B cell (primary cell): ENCODE measurements at regions of chr16 and their contacts with region 1.

Region 1: DNA sequence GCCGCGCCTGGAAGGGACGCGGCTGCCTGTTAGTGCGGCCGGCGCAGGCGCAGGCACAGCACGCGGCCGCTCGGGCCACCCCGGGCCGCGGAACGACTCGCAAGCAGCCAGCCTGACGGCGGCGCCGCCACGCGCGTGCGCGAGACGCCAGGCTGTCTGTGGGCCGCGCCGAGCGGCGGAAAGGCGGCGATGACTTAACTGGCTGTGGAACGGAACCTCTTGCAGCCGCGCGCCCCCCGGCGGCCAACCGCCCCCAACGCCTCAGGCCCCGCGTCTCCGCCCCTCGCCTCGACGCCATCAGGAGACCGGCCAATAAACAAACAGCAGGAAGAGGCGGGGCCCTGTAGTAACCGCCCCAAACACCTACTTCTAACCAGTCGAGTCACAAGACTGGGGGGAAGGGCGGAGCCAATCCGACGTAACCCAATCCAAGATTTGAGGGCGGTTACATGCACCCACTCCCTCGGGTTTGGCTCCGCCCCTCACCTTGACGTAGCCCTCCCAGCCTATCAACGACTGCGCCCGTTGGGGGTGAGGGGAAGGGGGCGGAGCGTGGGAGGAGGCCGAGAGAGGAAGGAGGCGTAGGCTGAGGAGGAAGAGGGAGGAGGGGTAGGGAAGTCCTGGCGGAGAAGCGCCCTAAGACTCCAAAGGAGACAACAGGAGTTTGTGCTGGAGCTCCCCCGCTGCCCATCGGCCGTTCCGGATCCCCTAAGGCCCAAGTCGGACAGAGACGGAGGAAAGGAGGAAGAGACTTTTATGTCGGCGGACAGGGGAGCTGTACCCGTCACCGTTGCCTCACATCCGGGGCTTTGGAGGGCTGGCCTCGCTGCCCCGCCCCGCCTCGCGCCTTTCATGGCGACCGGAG is at the start of gene FBRS:
- DNase-seq: peak; percentile 100
- ATAC-seq: peak; percentile 76
- H3K4me3 ChIP-seq: peak within 1 kb of the TSS; percentile 49 to 90 (median 79)
- H3K4me3 Mint-ChIP-seq: peak within 1 kb of the TSS; percentile 97
- H3K27ac ChIP-seq: peak within 1 kb of the TSS; percentile 88 to 98
- H3K27ac Mint-ChIP-seq: peak within 1 kb of the TSS; percentile 100
- H3K4me1 ChIP-seq: peaks cover 30 to 44% of the 10 kb centered on the region in 2 donors
- H3K4me1 Mint-ChIP-seq: peaks cover 30% of the 10 kb centered on the region
- H3K27me3 ChIP-seq: no peaks in the 10 kb centered on the region
- H3K27me3 Mint-ChIP-seq: no peaks in the 10 kb centered on the region
- CTCF ChIP-seq: peak; percentile 81
- total RNA-seq, gene FBRS: 191 and 194 TPM in 2 replicates

Region 2: DNA sequence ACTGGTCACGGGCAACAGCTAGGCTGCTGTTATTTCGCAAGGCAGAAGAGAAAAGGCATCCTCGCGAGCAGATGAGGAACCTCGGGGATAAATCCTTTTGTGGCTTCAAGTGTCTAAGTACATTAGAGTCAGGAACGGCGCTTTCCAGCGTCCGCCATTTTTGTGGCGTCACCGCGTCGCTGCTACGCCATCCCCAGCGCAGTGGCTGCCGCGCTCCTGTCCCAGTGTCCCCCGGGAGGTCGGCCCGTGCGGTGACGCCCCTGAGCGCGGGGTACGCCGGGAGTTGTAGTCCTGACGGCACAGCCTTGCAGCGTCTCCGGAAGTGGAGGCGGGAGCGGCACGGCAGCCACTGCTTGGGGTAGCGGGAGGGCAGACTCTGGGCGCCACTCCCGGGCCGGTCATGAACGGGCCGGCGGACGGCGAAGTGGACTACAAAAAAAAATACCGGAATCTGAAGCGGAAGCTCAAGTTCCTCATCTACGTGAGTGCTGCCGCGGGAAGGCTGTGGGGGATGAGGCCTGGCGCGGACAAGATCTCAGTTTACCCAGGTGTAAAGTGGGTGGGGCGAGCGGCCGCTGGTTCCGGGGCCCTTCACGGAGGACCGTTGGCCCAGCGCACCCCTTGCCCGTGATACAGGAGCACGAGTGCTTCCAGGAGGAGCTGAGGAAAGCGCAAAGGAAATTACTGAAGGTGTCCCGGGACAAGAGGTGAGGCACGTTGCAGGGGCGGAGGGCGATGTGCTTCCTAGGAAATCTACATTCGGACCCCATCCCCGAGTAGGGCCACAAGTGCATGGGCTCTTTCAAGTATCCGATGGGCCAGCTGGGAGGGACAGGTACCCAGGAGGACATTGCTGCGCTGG is 662.0 kb before region 1 on chr16 and contains the start of gene INO80E:
- CTCF ChIA-PET with region 1: no interaction called
- POLR2A ChIA-PET with region 1: no interaction called
- intact Hi-C with region 1: loop called (anchors 5 kb)
- DNase-seq: peak; percentile 97
- ATAC-seq: peak; percentile 96
- H3K4me3 ChIP-seq: peak within 1 kb of the TSS; percentile 89 to 100 (median 98)
- H3K4me3 Mint-ChIP-seq: peak within 1 kb of the TSS; percentile 98
- H3K27ac ChIP-seq: peak within 1 kb of the TSS; percentile 94 to 97
- H3K27ac Mint-ChIP-seq: peak within 1 kb of the TSS; percentile 94
- H3K4me1 ChIP-seq: peaks cover 15 to 22% of the 10 kb centered on the region in 2 donors
- H3K4me1 Mint-ChIP-seq: peaks cover 43% of the 10 kb centered on the region
- H3K27me3 ChIP-seq: no peaks in the 10 kb centered on the region
- H3K27me3 Mint-ChIP-seq: no peaks in the 10 kb centered on the region
- CTCF ChIP-seq: no peak
- total RNA-seq, gene INO80E: 113 and 119 TPM in 2 replicates

Region 3: GRCh38 chr16:30378236-30379204 is 279.6 kb before region 1 on chr16:
- CTCF ChIA-PET with region 1: no interaction called
- POLR2A ChIA-PET with region 1: interaction called, 3 read pairs
- intact Hi-C with region 1: loop called (anchors 1 kb)
- DNase-seq: peak; percentile 99
- ATAC-seq: peak; percentile 85
- H3K4me3 ChIP-seq: peak overlapping the region; percentile 42 to 87 (median 68)
- H3K4me3 Mint-ChIP-seq: peak overlapping the region; percentile 94
- H3K27ac ChIP-seq: peak overlapping the region; percentile 97 to 100
- H3K27ac Mint-ChIP-seq: peak overlapping the region; percentile 100
- H3K4me1 ChIP-seq: peaks cover 34 to 64% of the 10 kb centered on the region in 2 donors
- H3K4me1 Mint-ChIP-seq: peaks cover 50% of the 10 kb centered on the region
- H3K27me3 ChIP-seq: no peaks in the 10 kb centered on the region
- H3K27me3 Mint-ChIP-seq: no peaks in the 10 kb centered on the region
- CTCF ChIP-seq: no peak

Region 4: DNA sequence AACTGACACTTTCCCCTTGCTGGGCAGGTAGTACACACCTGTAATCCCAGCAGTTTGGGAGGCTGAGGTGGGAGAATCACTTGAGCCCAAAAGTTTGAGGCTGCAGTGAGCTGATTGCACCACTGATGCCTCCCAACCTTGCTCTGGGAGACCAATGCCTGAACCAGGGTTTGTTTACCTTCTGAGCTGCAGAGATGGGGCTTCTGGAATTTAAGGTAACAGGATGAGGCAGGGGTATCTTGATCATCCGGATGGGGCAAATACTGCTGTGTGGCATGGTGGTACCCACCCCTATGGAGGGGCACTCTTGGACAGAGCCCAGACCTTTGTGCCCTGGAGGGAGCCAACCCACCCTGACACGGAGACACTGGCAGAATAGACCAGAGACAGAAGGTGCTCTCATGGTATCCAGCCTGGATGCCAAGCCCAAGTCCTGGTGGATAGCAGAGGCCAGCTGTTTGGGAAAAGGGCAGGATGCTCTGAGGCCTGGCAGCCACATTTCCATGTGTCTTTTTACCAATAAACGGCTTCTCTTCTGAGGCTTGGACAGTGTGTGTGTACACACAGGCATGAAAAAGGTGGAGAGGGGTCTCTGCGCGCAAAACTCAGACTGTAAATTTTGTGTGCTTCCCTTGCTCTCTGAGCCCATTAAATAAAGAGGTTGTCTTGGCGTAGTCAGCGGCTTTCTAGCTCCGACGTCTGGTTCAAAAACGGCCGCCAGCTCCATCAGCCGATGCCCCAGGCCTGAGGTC is 258.5 kb before region 1 on chr16:
- CTCF ChIA-PET with region 1: no interaction called
- POLR2A ChIA-PET with region 1: no interaction called
- intact Hi-C with region 1: no loop called
- DNase-seq: peak; percentile 12
- ATAC-seq: no peak
- H3K4me3 ChIP-seq: peak overlapping the region in 4 of 5 experiments; percentile 61 to 85 (median 70)
- H3K4me3 Mint-ChIP-seq: peak overlapping the region; percentile 90
- H3K27ac ChIP-seq: no peak overlapping the region
- H3K27ac Mint-ChIP-seq: peak overlapping the region; percentile 63
- H3K4me1 ChIP-seq: peaks cover 16 to 36% of the 10 kb centered on the region in 2 donors
- H3K4me1 Mint-ChIP-seq: peaks cover 27% of the 10 kb centered on the region
- H3K27me3 ChIP-seq: no peaks in the 10 kb centered on the region
- H3K27me3 Mint-ChIP-seq: peaks cover 4% of the 10 kb centered on the region
- CTCF ChIP-seq: no peak

Region 5: GRCh38 chr16:30571695-30572600 is 86.2 kb before region 1 on chr16 and contains the start of gene ZNF688:
- CTCF ChIA-PET with region 1: no interaction called
- POLR2A ChIA-PET with region 1: interaction called, 5 read pairs
- intact Hi-C with region 1: loop called (anchors 1 kb)
- DNase-seq: peak; percentile 97
- ATAC-seq: peak; percentile 86
- H3K4me3 ChIP-seq: peak within 1 kb of the TSS; percentile 72 to 89 (median 86)
- H3K4me3 Mint-ChIP-seq: peak within 1 kb of the TSS; percentile 91
- H3K27ac ChIP-seq: peak within 1 kb of the TSS; percentile 96 to 97
- H3K27ac Mint-ChIP-seq: peak within 1 kb of the TSS; percentile 99
- H3K4me1 ChIP-seq: peaks cover 29 to 43% of the 10 kb centered on the region in 2 donors
- H3K4me1 Mint-ChIP-seq: peaks cover 40% of the 10 kb centered on the region
- H3K27me3 ChIP-seq: no peaks in the 10 kb centered on the region
- H3K27me3 Mint-ChIP-seq: no peaks in the 10 kb centered on the region
- CTCF ChIP-seq: no peak
- total RNA-seq, gene ZNF688: 23.1 and 24.9 TPM in 2 replicates

Region 6: DNA sequence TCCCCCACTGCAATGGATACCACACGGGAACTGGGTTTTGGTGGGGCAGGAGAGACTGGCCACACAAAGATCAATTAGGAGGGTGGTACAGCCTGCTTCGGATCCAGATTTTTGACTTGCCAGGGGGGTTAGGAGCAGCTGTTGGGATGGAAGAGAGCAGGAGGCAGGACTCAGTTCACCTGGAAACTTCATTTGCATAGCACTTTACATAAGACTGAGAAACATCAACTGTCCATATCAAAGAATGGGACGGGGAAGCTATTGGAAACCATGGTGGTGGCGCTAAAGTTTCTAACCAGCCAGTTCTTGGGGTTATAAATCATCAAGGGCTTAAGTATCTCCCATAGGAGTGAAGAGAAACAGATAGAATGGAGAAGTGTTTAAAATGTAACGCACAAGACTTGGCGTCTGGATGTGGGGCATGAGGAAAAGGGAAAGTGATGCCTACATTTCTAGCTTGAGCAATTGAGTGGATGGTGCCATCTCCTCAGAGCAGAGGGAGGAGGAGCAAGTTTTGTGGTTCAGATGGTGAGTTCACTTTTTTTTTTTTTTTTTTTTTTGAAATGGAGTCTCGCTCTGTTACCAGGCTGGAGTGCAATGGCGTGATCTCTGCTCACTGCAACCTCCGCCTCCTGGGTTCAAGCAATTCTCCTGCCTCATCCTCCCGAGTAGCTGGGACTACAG is 34.4 kb after region 1 on chr16:
- CTCF ChIA-PET with region 1: interaction called, 38 read pairs
- POLR2A ChIA-PET with region 1: interaction called, 41 read pairs
- intact Hi-C with region 1: loop called (anchors 1 kb)
- DNase-seq: no peak
- ATAC-seq: no peak
- H3K4me3 ChIP-seq: no peak overlapping the region
- H3K4me3 Mint-ChIP-seq: no peak overlapping the region
- H3K27ac ChIP-seq: no peak overlapping the region
- H3K27ac Mint-ChIP-seq: peak overlapping the region; percentile 13
- H3K4me1 ChIP-seq: peaks cover 8 to 10% of the 10 kb centered on the region in 2 donors
- H3K4me1 Mint-ChIP-seq: peaks cover 10% of the 10 kb centered on the region
- H3K27me3 ChIP-seq: no peaks in the 10 kb centered on the region
- H3K27me3 Mint-ChIP-seq: no peaks in the 10 kb centered on the region
- CTCF ChIP-seq: no peak

Region 7: DNA sequence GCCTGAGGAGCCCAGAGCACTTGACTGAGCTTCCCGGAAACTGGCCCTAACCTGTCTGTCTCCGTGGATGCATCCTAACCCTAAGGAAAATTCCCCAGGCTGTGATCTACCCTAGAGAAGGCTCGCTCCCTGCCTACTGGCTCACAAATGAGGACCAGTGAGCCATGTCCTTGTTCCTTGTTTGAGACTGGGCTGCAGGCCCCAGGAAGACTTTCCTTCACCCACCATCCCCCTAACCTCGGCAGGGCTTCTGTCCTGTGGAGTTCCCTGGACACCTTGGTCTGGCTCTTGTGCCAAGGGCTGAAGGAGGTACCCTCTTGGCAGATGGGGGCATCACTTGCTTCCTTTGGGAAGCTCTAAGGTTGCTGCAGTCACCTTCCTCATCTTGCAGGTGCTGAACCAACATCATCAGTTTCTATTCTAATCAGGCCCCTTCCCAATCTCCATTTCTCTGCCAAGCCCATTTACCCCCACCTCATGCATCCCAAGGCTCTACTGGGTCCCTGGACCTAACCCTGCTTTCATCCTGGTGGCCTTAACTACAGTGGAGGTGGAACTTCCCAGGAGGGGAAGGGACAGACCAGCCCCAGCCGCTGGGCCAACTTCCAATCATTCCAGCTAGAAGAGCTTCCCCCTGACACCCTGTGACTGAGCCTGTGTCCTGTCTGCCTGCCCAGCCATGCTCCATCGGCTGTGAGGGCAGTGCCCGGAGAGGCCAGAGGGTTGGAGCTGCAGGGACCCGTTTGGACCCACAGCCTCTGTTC is 116.5 kb after region 1 on chr16:
- CTCF ChIA-PET with region 1: no interaction called
- POLR2A ChIA-PET with region 1: no interaction called
- intact Hi-C with region 1: no loop called
- DNase-seq: peak; percentile 19
- ATAC-seq: no peak
- H3K4me3 ChIP-seq: no peak overlapping the region
- H3K4me3 Mint-ChIP-seq: peak overlapping the region; percentile 88
- H3K27ac ChIP-seq: no peak overlapping the region
- H3K27ac Mint-ChIP-seq: peak overlapping the region; percentile 32
- H3K4me1 ChIP-seq: peaks cover 10 to 15% of the 10 kb centered on the region in 2 donors
- H3K4me1 Mint-ChIP-seq: peaks cover 28% of the 10 kb centered on the region
- H3K27me3 ChIP-seq: peaks cover 0 to 19% (median 6%) of the 10 kb centered on the region in 4 experiments
- H3K27me3 Mint-ChIP-seq: peaks cover 15% of the 10 kb centered on the region
- CTCF ChIP-seq: no peak

Region 8: DNA sequence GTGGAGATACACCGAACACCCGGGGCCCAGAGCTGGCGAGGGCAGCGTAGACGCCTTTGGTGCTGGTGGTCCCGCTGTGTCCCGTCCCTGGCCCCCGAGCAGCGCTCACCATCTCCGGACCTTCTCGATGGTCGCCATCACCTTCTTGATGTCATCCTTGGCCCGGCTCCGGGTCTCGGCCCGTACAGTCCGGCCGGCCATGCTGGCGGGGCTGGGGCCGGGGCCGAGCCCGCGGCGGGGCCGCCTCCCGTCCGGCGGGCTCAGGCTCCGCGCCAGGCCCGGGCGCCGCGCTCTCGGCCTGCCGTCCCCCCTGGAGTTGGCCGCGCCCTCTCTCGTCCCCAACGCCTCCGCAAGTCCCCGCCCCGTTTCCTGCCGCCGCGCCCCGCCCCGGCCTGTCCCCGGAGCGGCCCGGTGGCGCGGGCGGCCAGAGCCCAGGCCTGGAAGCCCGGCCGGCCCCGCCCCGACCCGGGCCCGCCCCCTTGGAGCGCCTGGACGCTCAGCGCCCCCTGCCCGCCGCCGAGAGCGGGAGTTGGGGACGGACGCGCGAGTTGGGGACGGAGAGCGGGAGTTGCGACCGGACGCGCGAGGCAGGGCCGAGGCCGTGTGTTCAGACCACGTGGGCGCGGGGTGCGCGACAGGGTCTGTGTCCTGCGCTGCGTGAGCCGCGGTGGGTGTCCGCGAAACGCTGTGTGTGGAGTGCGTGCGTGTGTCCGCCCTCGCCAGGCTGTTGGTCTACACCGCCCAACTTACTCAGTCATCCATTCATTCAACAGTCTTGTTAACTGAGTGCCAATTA is 235.8 kb after region 1 on chr16 and contains the start of gene BCL7C:
- CTCF ChIA-PET with region 1: no interaction called
- POLR2A ChIA-PET with region 1: no interaction called
- intact Hi-C with region 1: loop called (anchors 1 kb)
- DNase-seq: peak; percentile 85
- ATAC-seq: peak; percentile 80
- H3K4me3 ChIP-seq: peak within 1 kb of the TSS; percentile 11 to 72 (median 65)
- H3K4me3 Mint-ChIP-seq: peak within 1 kb of the TSS; percentile 91
- H3K27ac ChIP-seq: peak within 1 kb of the TSS; percentile 63 to 79
- H3K27ac Mint-ChIP-seq: peak within 1 kb of the TSS; percentile 93
- H3K4me1 ChIP-seq: peaks cover 32 to 43% of the 10 kb centered on the region in 2 donors
- H3K4me1 Mint-ChIP-seq: peaks cover 48% of the 10 kb centered on the region
- H3K27me3 ChIP-seq: no peaks in the 10 kb centered on the region
- H3K27me3 Mint-ChIP-seq: no peaks in the 10 kb centered on the region
- CTCF ChIP-seq: no peak
- total RNA-seq, gene BCL7C: 30.5 and 31.6 TPM in 2 replicates